Left lung (tissue), 14 donors: ENCODE measurements at regions of chr2 and their contacts with region 1.

Region 1: DNA sequence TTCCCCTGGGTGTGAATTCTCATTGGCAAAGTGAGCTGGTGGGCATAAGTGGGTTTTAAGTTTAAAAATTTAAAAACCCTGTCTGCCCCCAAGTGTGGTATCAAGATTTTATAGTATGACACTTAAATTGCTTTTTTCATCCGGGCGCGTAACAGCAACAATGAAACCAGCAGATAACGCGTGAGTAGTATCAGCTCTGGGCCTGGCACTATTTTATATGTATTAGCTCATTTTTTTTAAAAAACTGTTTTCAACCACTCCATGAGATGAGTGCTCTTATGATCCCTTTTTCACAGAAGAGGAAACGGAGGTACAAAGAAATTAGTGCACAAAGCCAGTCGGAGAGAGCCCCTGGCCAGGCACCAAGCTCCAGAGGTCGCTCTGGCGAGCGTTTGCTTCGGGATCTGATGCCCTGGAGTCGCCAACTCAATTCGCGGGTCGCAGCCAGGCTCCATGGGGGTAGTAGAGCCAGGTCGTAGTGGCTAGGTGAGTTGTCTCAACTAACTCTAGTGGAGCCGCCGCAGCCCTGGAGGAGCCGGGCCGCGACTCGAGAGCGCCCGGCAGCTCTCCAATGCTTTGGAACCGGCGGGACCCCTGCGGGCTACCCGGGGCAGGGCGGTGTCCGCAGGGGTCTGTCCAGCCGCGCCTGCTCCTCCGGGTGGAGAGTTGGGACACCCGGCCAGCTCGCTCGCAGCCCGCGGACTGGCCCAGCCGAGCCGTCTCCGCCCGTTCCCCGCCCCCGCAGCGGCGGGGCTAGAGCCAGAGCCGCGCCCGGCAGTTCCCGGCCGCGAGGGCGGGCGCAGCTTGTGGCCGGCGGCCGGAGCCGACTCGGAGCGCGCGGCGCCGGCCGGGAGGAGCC is at the start of gene IL1R1:
- DNase-seq: peak; percentile 80 to 96 (median 88)
- ATAC-seq: peak; percentile 90
- H3K4me3 ChIP-seq: peak within 1 kb of the TSS; percentile 58 to 64
- H3K27ac ChIP-seq: peak within 1 kb of the TSS; percentile 92 to 96
- H3K4me1 ChIP-seq: peaks cover 8 to 82% of the 10 kb centered on the region in 2 donors
- H3K27me3 ChIP-seq: no peaks in the 10 kb centered on the region
- CTCF ChIP-seq: no peak
- polyA plus RNA-seq, gene IL1R1: 91.1 to 137 (median 109) TPM

Region 2: DNA sequence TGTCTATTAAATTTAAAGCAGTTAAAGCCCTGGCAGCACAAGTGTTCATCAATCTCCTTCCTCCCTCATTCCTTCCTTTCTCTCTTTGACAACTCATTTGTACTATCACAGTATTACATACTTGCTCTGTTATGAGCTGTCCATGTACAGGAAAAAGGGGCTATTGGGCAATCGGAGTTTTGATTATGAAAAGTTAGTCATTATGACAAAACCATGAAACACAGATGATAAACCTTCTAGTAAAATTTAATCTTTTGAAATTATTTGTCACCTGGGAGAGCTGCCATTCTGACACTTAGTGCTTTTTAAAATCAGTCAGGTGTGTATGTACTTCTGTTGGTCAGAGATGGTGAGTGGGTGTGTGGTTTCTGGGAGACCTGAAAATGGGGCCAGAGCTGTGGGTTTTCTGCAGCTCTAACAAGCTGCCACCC is 405.3 kb before region 1 on chr2:
- intact Hi-C with region 1: no loop called
- DNase-seq: peak in 1 of 4 donors; percentile 46
- ATAC-seq: peak; percentile 62
- H3K4me3 ChIP-seq: no peak overlapping the region
- H3K27ac ChIP-seq: peak overlapping the region in 1 of 2 donors; percentile 59
- H3K4me1 ChIP-seq: peaks cover 18 to 86% of the 10 kb centered on the region in 2 donors
- H3K27me3 ChIP-seq: no peaks in the 10 kb centered on the region
- CTCF ChIP-seq: no peak

Region 3: DNA sequence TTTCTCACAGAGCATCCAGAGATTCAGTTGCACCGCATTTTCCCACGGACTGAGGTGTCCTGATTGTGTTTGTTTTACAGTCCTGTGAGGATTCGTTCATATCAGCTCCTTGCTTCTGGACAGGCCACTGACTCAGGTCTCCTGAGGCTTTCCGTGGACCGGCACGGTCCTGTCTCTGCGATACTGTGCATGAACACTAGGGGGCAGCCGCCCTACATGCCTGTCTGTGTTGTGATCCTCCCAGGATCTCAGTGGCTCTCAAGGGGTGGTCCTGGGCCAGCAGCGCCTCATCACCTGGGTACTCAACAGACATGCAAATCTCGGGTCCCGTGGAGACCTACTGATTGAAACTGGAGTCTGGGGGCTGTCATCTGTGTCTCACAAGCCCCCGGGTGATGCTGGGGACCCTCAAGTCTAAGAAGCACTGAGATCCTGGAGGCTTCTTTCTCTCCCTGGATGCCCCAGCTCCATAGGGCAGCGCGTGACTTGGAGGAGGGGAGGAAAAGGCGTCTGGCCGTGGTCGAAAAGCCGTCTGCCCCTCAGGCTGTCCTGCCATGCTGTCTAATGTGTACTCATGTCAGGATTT is 121.5 kb before region 1 on chr2:
- intact Hi-C with region 1: loop called in 1 of 2 experiments (anchors 10 kb)
- DNase-seq: peak; percentile 85 to 90 (median 87)
- ATAC-seq: peak; percentile 98
- H3K4me3 ChIP-seq: no peak overlapping the region
- H3K27ac ChIP-seq: peak overlapping the region; percentile 18 to 39
- H3K4me1 ChIP-seq: peaks cover 9 to 41% of the 10 kb centered on the region in 2 donors
- H3K27me3 ChIP-seq: no peaks in the 10 kb centered on the region
- CTCF ChIP-seq: peak; percentile 95 to 99

Region 4: DNA sequence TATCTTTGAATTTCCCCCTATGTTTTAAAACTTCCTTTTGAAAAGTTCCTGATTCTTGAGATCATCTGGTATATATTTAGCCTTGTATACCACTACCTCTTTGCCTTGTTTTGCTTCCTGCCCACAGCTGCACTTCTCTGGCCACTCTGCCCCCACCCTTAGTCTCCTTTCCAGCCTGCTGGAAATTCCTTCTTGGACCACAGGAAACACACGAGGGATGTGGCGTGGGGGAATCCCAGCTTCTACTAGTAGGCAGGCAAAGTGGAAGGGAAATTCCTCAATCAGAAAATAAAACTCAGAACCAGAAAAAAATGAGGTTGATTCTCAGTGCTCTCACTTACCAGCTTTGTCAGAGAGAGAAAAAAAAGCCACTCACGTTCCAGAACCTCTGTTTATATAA is 294.1 kb after region 1 on chr2:
- intact Hi-C with region 1: no loop called
- DNase-seq: peak in 1 of 4 donors; percentile 17
- ATAC-seq: peak; percentile 12
- H3K4me3 ChIP-seq: no peak overlapping the region
- H3K27ac ChIP-seq: peak overlapping the region in 1 of 2 donors; percentile 42
- H3K4me1 ChIP-seq: peaks cover 0 to 21% of the 10 kb centered on the region in 2 donors
- H3K27me3 ChIP-seq: no peaks in the 10 kb centered on the region
- CTCF ChIP-seq: no peak